Right ventricle myocardium inferior (tissue), 1 donor: ENCODE measurements at regions of chr1 and their contacts with region 1.

Region 1: DNA sequence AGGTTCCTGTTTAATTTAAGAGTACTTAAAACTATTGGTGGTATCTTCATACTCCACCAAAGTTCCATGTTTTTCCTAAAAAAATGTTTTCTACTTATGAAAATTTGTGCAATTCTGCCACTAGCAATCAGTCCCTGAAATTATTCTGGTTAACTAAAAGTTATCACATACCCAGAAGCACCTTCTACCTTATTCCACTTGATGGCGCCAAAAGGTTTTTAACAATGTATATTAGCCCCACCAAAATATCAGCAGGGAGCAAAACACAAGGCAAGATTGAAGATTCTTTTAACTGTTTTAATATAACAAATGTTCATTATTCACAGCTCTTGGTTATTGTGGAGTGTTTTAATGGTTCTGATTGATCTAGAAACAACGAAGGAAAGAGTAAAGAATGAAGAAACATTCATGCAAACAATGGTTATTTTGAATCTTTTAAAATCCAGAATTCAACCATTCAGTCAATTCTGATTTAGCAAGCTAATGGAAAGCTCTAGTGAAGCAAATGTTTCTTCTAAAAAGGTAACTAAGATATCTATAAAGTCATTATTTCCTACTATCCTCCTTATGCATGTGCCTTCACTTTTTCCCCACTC is 67.2 kb downstream of the TTLL7 start:
- DNase-seq: no peak
- ATAC-seq: peak; percentile 63

Region 2: DNA sequence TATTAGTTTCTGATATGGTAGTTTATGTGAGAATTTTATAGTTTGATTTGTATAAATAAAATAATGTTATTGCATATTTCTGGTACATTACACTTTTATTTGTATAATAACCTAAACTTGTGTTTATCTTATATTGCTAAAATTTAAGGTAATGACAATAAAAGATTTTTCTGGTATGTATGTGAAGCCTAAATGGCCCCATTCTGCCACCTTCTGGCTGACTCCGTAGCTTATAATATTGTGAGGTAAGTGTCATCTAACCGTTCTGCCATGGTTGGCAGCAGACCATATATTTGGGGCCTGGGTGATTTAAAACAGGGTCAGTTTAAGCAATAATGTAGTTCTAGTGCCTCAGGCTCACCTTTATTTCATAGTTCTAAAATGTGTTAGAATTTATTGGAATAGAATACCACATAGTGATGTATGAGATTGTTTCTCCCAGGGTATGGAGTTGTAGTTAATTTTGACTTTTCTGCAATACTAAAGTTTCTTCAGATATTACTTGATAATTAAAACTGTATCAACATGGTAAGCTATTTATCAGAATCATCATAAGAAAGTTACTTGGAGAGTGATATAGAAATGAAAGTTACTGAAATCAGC is 191.1 kb after region 1 on chr1:
- intact Hi-C with region 1: loop called (anchors 1 kb)
- DNase-seq: no peak
- ATAC-seq: peak; percentile 65

Region 3: GRCh38 chr1:84433258-84434080 is 501.7 kb after region 1 on chr1:
- intact Hi-C with region 1: loop called (anchors 5 kb)
- DNase-seq: no peak
- ATAC-seq: peak; percentile 78

Region 4: GRCh38 chr1:84753516-84754385 is 822.0 kb after region 1 on chr1:
- intact Hi-C with region 1: loop called (anchors 10 kb)
- DNase-seq: peak; percentile 83
- ATAC-seq: peak; percentile 80